ENCODE measurements at regions of chr5 and their contacts with region 1.

Region 1: DNA sequence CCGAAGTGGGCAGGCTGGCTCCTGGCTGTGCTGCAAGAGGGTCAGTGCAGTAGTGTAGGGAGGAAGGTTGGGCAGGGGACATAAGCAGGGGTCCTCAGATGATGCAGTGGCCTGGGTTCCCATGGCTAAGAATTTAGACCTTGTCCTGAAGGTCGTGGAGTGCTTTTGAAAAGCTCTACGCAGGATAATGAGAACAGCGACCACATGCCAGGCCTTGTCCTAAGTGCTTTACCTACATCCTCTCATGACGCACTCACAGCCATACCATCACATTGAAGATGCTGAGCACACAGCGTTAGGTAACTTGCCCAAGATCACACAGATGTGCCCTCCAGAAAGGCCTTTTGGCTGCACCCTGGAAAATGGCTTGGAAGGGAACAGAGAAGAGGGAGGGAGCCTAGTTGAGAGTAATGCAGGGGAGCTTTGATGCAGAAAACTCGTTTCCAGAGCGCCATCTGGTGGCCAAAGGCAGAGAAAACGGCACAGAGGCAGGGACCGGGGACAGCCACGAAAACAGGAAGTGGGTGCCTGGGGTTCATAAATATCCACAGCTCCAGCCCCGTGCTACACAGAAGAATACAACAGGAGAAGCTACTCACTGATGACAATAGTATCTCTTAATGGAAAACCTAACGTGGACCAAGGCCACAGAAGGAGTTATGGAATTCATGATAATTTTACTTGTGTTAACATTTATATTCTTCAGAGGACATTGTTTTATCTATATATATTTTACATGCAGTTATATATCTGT is 2.6 kb upstream of the PCDH12 start:
- DNase-seq: peak; percentile 50 to 92
- H3K4me3 ChIP-seq: no peak overlapping the region
- H3K27ac ChIP-seq: no peak overlapping the region
- H3K4me1 ChIP-seq: peaks cover 2 to 9% (median 9%) of the 10 kb centered on the region in 4 experiments; a peak in 6 of 7 replicates
- H3K27me3 ChIP-seq: no peaks in the 10 kb centered on the region; a peak in 1 of 7 replicates
- CTCF ChIP-seq: peak; percentile 80 to 91 (median 88)
- EP300 ChIP-seq: no peak
- POLR2A ChIP-seq: no peak
- RAD21 ChIP-seq: peak; percentile 87

Region 2: DNA sequence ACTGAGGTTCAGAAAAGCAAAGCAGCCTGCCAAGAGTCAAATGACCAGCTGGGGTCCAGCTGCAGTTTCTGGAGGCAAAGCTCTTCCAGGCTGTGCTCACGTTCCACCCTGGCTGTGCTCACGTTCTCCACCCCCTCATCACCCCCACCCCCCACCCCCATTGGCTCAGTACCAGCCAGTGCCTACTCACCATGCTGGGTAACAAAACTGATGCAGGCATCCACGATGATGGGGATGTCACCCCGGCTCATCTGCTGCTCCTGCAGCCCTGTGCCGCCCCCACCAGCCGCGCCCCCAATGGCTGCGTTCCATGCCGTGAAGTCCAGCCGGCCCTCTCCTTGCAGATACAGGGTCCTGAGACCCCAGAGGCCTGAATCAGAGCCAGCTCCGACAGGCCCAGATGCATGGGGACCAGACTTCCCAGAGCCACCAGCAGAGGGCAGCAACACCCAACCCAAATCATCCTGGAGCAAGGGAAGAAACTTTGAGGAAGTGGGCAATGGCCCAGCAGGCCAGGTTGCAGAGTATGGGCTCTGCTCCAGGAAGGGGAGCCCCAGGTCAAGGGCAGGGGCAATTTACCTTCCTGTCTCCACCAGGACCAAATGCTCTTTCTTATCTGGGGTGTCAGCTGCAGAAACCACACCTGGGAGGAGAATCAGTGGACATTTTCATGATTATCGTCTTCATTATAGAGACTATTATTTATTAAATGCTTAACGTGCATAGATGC is 295.7 kb before region 1 on chr5:
- CTCF ChIA-PET with region 1: interaction called, 18 read pairs
- POLR2A ChIA-PET with region 1: no interaction called
- DNase-seq: peak; percentile 66 to 94
- H3K4me3 ChIP-seq: no peak overlapping the region
- H3K27ac ChIP-seq: no peak overlapping the region
- H3K4me1 ChIP-seq: no peaks in the 10 kb centered on the region
- H3K27me3 ChIP-seq: no peaks in the 10 kb centered on the region
- CTCF ChIP-seq: peak; percentile 91 to 96 (median 91)
- EP300 ChIP-seq: no peak
- POLR2A ChIP-seq: no peak
- RAD21 ChIP-seq: peak; percentile 90 to 95

Region 3: GRCh38 chr5:141691867-141692532 is 268.6 kb before region 1 on chr5:
- CTCF ChIA-PET with region 1: interaction called, 116 read pairs
- POLR2A ChIA-PET with region 1: interaction called, 9 read pairs
- DNase-seq: peak in 1 of 2 experiments; percentile 98
- H3K4me3 ChIP-seq: peak overlapping the region; percentile 19 to 60 (median 54); a peak in 7 of 8 replicates
- H3K27ac ChIP-seq: no peak overlapping the region
- H3K4me1 ChIP-seq: peaks cover 4 to 13% (median 9%) of the 10 kb centered on the region in 4 experiments
- H3K27me3 ChIP-seq: peaks cover 0 to 11% (median 2%) of the 10 kb centered on the region in 4 experiments; a peak in 2 of 7 replicates
- CTCF ChIP-seq: peak; percentile 95 to 99 (median 97)
- EP300 ChIP-seq: no peak
- POLR2A ChIP-seq: no peak
- RAD21 ChIP-seq: peak; percentile 98 to 99

Region 4: GRCh38 chr5:141889282-141889871 is 71.2 kb before region 1 on chr5:
- CTCF ChIA-PET with region 1: interaction called, 14 read pairs
- POLR2A ChIA-PET with region 1: no interaction called
- DNase-seq: no peak
- H3K4me3 ChIP-seq: no peak overlapping the region
- H3K27ac ChIP-seq: no peak overlapping the region
- H3K4me1 ChIP-seq: no peaks in the 10 kb centered on the region
- H3K27me3 ChIP-seq: no peaks in the 10 kb centered on the region
- CTCF ChIP-seq: no peak; a peak in 1 of 4 replicates
- EP300 ChIP-seq: no peak
- POLR2A ChIP-seq: no peak
- RAD21 ChIP-seq: peak; percentile 25 to 49; a peak in 3 of 4 replicates

Region 5: DNA sequence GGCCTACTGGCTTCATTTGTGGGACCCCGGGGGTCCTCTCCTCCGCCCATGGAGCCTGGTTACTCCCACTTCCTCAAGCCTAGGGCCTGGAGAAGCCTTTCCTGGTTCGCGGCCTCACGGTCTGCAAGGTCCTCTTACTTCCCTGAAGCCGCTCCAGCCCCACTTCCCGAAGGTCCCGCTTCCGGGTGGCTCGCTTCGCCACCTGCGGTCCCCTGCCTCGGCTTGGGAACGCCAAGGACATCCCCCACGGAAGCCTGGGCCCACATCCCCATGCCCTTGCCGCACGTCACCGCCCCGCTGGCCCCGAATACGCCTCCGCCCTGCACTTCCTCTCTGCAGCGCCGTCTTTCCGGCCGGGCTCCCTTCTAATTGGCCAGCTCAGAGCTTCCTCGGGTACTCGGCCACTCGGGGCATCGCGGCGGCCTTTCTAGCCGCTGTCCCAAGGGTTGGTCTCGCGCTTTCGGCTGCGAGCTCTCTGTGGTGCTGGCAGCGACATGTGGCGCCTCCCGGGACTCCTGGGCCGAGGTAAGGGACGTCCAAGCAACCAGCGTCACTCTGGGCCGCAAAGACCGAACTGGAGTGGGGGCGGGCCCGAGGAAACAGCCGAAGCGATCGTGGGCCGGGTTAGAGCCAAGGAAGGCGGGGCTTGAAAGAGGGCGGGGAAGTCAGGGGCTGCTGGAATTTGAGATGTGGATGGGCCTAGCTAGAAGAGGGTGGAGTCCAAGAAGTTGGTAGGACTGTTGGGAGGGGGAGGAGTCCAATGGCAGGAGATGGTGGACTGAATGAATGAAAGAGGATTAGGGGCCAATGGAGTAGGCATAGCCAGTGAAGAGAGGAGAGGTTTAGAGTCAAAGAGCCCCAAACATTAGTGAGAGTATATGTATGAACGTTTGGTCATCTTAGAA is 36.9 kb before region 1 on chr5 and contains the start of gene DELE1:
- CTCF ChIA-PET with region 1: interaction called, 15 read pairs
- POLR2A ChIA-PET with region 1: interaction called, 5 read pairs
- DNase-seq: peak; percentile 69 to 90
- H3K4me3 ChIP-seq: peak within 1 kb of the TSS; percentile 68 to 84 (median 74)
- H3K27ac ChIP-seq: peak within 1 kb of the TSS; percentile 71; the same call in 1 of the 2 replicates
- H3K4me1 ChIP-seq: peaks cover 0 to 3% (median 3%) of the 10 kb centered on the region in 4 experiments; a peak in 3 of 7 replicates
- H3K27me3 ChIP-seq: no peaks in the 10 kb centered on the region
- CTCF ChIP-seq: peak in 1 of 3 experiments; percentile 5; a peak in 1 of 4 replicates
- EP300 ChIP-seq: no peak
- POLR2A ChIP-seq: peak in 1 of 2 experiments; percentile 84; a peak in 2 of 3 replicates
- RAD21 ChIP-seq: peak in 1 of 2 experiments; percentile 9; a peak in 1 of 4 replicates
- total RNA-seq, gene DELE1: 59.6 and 61.4 TPM in 2 replicates

Region 6: DNA sequence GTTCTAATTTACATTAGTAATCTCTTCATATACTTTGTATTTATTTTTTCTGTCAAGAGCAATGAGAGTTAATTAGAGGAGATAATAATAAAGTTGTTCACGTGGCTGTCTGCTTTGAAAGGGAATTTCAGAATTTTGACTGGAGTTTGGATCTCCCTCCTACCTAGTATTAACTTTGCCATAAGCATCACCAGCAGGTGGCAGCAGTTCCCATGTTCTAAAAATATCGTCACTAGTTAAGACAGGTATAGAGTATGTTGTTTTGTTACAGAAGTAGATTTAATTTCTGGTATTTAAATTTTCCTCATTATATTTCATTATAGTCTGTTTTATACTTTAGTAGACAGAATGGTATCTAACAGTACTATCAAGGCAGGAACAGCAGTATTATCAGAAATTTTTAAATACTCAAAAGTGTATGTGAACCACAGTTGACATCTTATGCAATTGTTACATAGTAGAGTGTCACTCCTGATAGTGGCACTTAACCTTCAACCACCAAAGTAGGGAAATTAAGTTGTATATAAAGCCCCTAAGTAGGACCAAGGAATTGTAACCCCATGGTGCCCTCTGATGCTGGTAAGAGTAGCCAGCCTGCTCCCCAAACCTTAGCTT is 31.8 kb after region 1 on chr5:
- CTCF ChIA-PET with region 1: interaction called, 19 read pairs
- POLR2A ChIA-PET with region 1: no interaction called
- DNase-seq: peak in 1 of 2 experiments; percentile 79
- H3K4me3 ChIP-seq: no peak overlapping the region
- H3K27ac ChIP-seq: no peak overlapping the region
- H3K4me1 ChIP-seq: no peaks in the 10 kb centered on the region
- H3K27me3 ChIP-seq: no peaks in the 10 kb centered on the region
- CTCF ChIP-seq: peak in 2 of 3 experiments; percentile 49 to 69; a peak in 2 of 4 replicates
- EP300 ChIP-seq: no peak
- POLR2A ChIP-seq: no peak
- RAD21 ChIP-seq: peak; percentile 55 to 66